GM13976 (cell line): ENCODE measurements at regions of chr13 and their contacts with region 1.

Region 1: DNA sequence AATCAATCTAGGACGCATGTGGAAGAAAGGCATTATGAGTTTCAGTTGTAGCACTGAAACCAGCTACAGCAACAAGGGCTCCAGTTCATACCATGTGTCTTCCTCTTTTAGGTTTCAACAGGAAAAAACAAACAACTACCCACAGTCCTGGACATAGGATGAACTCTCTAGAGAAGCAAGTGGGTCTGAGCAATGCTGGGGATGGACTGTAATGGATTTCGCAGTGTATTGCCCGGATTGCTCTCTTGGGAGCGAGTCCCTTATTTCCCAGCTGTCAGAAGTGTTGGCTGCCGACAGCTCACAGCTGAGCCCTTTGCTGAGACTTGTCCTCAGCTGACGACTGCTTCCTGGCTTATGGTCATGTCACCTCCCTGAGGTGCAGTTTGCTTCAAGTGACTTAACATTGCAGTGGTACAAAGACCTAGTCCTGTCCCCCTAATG is 12.1 kb upstream of the MYCBP2 start:
- DNase-seq: no peak
- CTCF ChIP-seq: no peak

Region 2: DNA sequence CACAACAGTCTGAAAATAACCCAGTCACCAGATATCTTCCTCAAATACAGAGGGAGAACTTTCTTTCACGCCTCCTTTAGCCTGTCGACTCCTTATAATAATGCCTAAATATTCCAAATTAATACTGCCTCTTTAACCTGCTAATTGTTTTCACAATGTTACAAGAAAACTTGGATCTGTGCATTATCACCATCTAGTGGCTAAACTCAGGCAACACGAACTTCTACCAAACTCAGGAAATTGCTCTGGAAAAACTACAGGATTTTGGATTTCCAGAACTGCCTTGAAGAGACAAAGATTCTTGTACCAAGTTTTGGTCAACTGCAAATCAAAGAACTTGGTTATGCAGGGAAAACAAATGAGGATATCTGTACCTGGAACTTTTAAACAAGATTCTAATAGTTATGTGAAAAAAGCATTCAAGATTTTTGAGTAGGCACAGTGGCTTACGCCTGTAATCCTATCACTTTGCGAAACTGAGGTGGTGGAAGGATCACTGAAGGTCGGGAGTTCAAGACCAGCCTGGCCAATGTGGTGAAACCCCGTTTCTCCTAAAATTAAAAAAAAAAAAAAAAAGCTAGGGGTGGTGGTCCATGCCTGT is 336.3 kb before region 1 on chr13:
- in situ Hi-C with region 1: no loop called
- DNase-seq: no peak
- CTCF ChIP-seq: peak; percentile 53

Region 3: DNA sequence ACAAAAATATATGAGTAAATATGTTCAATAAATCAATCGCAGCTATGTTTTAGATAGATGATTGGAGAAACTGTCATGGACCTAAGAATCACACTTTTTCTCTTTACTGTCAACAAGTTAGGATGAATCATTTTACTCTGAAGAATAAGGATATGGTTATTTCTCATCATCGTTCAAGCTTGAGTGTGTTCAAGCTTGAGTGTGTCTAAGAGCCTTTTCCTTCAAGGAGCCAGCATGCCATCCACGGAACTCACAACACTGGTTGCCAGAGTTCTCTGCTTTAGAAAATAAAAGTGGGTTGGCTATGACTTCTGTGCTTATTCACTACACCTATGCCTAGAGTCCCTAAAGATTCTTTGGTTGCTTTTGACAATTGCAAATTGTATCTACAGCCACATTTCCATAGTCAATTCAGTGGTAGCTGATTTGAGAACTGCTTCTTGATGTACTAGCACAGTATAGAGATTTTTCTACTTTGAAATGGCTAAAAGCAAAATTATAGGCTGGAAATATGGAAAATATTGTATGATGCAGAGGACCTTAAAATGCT is 138.4 kb after region 1 on chr13:
- in situ Hi-C with region 1: loop called (anchors 10 kb)
- DNase-seq: no peak
- CTCF ChIP-seq: no peak

Region 4: DNA sequence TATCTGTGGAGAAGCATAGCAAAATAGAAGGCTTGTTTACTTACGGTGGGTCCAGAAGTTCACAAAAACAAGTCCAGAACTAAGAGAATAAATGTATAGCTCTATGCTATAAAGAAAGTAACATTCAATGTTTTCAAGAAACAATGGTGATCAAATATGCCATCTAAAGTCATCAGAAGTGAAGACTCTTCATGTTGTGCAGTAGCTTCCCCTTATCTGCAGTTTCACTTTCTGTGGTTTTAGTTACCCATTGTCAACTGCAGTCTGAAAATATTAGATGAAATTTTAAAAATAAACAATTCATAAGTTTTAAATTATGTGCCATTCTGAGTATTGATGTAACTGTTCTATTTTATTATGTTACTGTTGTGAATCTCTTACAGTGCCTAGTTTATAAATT is 507.2 kb after region 1 on chr13:
- in situ Hi-C with region 1: no loop called
- DNase-seq: peak; percentile 8
- CTCF ChIP-seq: no peak